ENCODE measurements at regions of chr7 and their contacts with region 1.

Region 1: DNA sequence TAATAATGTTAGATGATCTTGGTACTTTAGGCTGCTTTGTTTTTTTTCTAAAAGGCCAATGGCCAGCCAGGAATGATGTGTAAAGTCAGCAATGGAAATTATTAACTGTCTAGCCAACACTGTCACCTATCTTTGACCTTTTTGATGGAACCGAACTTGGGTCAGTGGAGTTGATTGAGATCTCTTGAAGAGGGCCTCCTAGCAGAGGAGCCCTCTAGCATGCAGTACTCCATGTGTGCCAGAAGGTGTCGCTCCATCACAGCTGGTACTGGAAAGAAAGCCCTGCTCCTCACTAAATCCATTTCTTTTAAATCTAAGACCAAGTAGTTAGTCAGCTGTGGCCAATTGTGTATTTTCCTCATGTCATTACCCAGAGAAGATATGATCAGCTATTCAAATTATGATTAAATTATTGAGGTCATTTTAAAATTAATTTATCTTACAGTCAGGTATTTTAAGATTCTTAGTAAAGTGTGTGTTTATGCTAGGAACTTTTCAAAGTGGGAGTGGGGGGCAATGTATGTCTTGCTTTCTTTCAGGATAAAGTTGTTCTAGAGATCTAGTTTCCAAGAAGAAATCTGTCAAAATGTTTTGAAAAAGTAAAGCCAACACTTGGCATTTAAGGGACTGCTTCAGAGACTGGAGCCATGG is 33.1 kb upstream of the CROT start:
- DNase-seq: peak; percentile 73
- H3K4me3 ChIP-seq: no peak overlapping the region; a peak in 1 of 4 replicates
- H3K27ac ChIP-seq: no peak overlapping the region
- H3K4me1 ChIP-seq: peaks cover 0 to 5% of the 10 kb centered on the region in 2 experiments; a peak in 1 of 4 replicates
- H3K27me3 ChIP-seq: no peaks in the 10 kb centered on the region
- CTCF ChIP-seq: peak; percentile 100
- EP300 ChIP-seq: no peak
- RAD21 ChIP-seq: peak; percentile 100

Region 2: GRCh38 chr7:86574006-86574405 is 738.3 kb before region 1 on chr7:
- CTCF ChIA-PET with region 1: no interaction called
- POLR2A ChIA-PET with region 1: no interaction called
- DNase-seq: no peak
- H3K4me3 ChIP-seq: no peak overlapping the region
- H3K27ac ChIP-seq: no peak overlapping the region
- H3K4me1 ChIP-seq: no peaks in the 10 kb centered on the region
- H3K27me3 ChIP-seq: no peaks in the 10 kb centered on the region
- CTCF ChIP-seq: no peak
- EP300 ChIP-seq: no peak
- RAD21 ChIP-seq: no peak

Region 3: GRCh38 chr7:87300756-87301155 is 11.6 kb before region 1 on chr7:
- CTCF ChIA-PET with region 1: interaction called, 19 read pairs
- POLR2A ChIA-PET with region 1: no interaction called
- DNase-seq: no peak
- H3K4me3 ChIP-seq: no peak overlapping the region
- H3K27ac ChIP-seq: no peak overlapping the region
- H3K4me1 ChIP-seq: no peaks in the 10 kb centered on the region
- H3K27me3 ChIP-seq: no peaks in the 10 kb centered on the region; the same call in 1 of the 2 replicates
- CTCF ChIP-seq: no peak
- EP300 ChIP-seq: no peak
- RAD21 ChIP-seq: no peak

Region 4: GRCh38 chr7:87427288-87427687 is 114.9 kb after region 1 on chr7:
- CTCF ChIA-PET with region 1: interaction called, 13 read pairs
- POLR2A ChIA-PET with region 1: no interaction called
- DNase-seq: no peak
- H3K4me3 ChIP-seq: no peak overlapping the region
- H3K27ac ChIP-seq: no peak overlapping the region
- H3K4me1 ChIP-seq: no peaks in the 10 kb centered on the region
- H3K27me3 ChIP-seq: no peaks in the 10 kb centered on the region
- CTCF ChIP-seq: no peak
- EP300 ChIP-seq: no peak
- RAD21 ChIP-seq: no peak

Measured in SK-N-SH (cell line).